Breast epithelium (tissue), 4 donors: ENCODE measurements at regions of chr9 and their contacts with region 1.

Region 1: DNA sequence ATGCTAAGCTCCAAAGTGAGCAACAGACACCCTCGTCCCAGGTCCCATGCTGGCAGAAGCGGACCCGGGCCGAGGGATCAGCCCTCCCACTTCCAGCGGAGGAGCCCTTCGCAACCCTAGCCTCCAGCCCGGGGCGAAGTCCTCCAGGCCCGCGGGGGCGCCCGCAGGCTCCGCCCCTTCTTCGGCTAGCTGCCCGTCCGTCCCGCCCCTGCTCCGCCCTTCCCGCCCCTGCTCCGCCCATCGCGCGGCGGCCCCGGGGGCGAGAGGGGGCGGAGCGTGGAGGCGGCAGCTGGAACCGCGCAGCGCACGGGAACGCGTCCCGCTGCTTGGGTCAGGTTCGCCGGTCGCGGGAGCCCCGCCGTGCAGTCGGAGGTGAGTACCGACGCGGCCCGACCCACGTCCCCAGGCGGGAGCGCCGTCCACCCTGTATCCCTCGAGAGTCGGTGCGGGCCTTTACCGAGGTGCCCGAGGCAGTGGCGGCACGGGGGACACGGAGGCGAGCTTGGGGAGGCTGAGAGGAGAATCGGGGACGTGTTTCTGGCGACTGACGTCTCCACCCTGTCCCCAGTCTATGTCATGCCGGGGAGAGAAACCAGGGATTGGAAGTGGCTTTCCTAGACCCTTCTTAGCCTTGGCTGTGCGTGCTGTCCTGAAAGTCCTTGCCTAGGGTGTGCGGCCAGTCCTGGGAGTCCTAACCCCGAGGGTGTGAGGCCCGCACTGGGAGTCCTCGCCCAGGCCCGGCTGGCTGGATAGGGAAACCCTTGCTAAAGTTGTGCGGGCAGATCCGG is at the start of gene ACO1:
- DNase-seq: peak; percentile 56 to 76
- H3K4me3 ChIP-seq: peak within 1 kb of the TSS; percentile 77 to 92 (median 83)
- H3K27ac ChIP-seq: peak within 1 kb of the TSS; percentile 62 to 91
- H3K4me1 ChIP-seq: no peaks in the 10 kb centered on the region
- H3K27me3 ChIP-seq: no peaks in the 10 kb centered on the region
- CTCF ChIP-seq: no peak
- POLR2A ChIP-seq: no peak
- total RNA-seq, gene ACO1: 44.2 to 169 (median 47.1) TPM

Region 2: GRCh38 chr9:32490601-32491000 is 106.0 kb after region 1 on chr9:
- intact Hi-C with region 1: no loop called
- DNase-seq: no peak
- H3K4me3 ChIP-seq: no peak overlapping the region
- H3K27ac ChIP-seq: no peak overlapping the region
- H3K4me1 ChIP-seq: no peaks in the 10 kb centered on the region
- H3K27me3 ChIP-seq: no peaks in the 10 kb centered on the region
- CTCF ChIP-seq: no peak
- POLR2A ChIP-seq: no peak

Region 3: GRCh38 chr9:32550562-32551433 is 166.2 kb after region 1 on chr9:
- intact Hi-C with region 1: loop called (anchors 10 kb)
- DNase-seq: peak; percentile 89 to 90
- H3K4me3 ChIP-seq: peak overlapping the region; percentile 69 to 84 (median 76)
- H3K27ac ChIP-seq: peak overlapping the region; percentile 96 to 97
- H3K4me1 ChIP-seq: peaks cover 0 to 7% of the 10 kb centered on the region in 2 donors
- H3K27me3 ChIP-seq: no peaks in the 10 kb centered on the region
- CTCF ChIP-seq: no peak
- POLR2A ChIP-seq: peak; percentile 35